Kidney (tissue), 22 donors: ENCODE measurements at regions of chr13 and their contacts with region 1.

Region 1: DNA sequence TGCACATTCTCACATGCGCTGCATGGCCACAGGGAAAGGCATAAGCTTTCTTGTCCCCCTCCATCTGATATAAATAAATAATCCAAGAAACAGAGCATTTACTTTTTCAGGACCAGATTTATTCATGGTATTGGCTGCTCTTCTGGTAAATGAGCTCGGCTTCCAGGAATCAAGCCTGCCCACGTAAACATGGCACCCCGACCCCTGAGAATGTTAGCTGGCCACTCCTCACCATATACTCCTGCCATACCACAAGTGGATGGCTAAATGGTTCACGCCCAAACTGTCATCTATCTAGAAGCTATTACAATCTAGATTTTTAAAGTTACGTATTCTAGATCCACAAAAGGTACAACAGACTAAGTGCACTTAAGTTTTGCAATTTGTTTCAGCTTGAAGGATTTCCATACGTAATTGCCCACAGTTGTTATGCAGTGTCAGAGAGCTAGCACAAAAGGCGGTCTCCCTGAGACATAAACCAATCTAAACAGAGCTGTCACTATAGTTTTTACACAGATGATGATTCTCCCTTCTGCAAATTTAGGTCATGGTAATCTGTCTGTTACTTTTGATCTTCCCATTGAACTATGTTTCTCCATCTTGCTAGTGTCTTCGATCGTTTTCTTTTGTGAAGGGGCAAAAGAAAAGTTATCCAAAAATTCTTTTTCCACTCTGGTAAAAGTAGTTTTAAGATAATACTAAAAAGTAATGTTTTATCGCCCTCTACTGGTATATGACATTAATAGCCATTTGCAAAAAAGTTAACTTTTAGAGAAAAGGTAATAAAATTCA is 16.2 kb upstream of the FOXO1 start:
- DNase-seq: peak in 2 of 5 donors; percentile 54 to 61
- H3K4me3 ChIP-seq: no peak overlapping the region
- H3K27ac ChIP-seq: no peak overlapping the region
- H3K4me1 ChIP-seq: peaks cover 0 to 4% (median 0%) of the 10 kb centered on the region in 3 donors
- H3K27me3 ChIP-seq: no peaks in the 10 kb centered on the region
- CTCF ChIP-seq: peak; percentile 46

Region 2: DNA sequence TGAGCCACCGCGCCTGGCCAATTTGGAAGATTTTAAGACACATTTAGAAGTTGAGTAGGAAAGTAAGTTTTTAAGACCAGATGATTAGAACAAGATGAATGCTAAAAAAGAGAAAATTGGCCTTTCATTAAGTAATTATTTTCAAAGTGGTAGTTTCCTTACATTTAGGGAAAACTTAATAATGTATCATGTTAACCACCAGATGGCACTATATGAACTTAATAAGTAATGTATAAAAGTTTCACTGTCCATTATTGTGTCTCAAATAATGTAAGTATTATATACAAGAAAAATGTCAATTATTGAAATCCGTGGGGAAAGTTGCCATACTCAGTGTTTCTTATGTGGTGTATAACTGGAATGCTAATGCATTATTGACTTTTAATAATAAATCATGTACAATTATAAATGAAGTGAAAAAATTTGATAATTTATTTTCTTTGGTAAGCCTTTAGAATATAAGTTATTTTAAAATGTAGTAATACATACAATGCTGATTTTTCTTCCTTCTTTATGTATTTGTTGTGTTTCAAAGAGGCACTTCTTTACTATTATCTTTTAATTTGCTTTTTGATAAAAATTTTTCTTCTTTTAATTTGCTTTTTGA is 998.0 kb before region 1 on chr13:
- intact Hi-C with region 1: loop called (anchors 10 kb)
- DNase-seq: peak in 2 of 5 donors; percentile 19 to 53
- H3K4me3 ChIP-seq: no peak overlapping the region
- H3K27ac ChIP-seq: no peak overlapping the region
- H3K4me1 ChIP-seq: no peaks in the 10 kb centered on the region
- H3K27me3 ChIP-seq: no peaks in the 10 kb centered on the region
- CTCF ChIP-seq: no peak

Region 3: DNA sequence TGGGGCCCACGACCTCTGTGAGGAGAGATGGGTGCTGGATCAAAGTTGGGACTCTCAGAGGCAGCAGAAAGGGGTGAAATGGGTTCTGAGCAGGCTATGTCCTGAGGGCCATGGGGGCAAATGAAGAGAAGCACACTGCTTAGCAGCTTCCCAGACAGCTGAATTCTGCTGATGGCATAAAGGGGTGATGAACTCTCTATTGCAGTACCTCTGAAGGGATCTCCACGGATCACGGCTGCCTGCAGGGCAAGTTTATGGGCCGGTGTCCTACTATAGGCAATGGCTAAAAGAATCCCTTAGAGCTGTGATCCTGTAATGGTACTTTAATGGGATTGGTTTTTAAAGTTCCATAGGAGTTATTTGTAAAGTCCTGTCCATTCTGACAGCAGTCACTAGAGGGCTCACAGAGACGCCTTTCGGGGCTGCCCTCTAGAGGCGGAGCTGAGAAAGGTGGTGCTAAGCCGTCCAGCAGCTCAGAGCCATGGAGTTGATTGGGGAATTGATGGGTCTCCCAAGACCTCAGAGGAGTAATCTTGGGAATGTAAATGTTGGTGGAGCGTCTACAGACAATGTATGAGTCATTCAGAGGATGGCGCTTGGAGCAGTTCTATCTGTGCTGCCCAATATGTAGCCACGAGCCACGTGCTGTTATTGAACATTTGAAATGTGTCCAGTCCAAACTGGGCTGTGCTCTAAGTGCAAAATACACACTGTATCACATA is 739.9 kb before region 1 on chr13:
- intact Hi-C with region 1: loop called (anchors 10 kb)
- DNase-seq: peak in 4 of 5 donors; percentile 53 to 82 (median 60)
- H3K4me3 ChIP-seq: no peak overlapping the region
- H3K27ac ChIP-seq: no peak overlapping the region
- H3K4me1 ChIP-seq: no peaks in the 10 kb centered on the region
- H3K27me3 ChIP-seq: no peaks in the 10 kb centered on the region
- CTCF ChIP-seq: peak; percentile 89

Region 4: DNA sequence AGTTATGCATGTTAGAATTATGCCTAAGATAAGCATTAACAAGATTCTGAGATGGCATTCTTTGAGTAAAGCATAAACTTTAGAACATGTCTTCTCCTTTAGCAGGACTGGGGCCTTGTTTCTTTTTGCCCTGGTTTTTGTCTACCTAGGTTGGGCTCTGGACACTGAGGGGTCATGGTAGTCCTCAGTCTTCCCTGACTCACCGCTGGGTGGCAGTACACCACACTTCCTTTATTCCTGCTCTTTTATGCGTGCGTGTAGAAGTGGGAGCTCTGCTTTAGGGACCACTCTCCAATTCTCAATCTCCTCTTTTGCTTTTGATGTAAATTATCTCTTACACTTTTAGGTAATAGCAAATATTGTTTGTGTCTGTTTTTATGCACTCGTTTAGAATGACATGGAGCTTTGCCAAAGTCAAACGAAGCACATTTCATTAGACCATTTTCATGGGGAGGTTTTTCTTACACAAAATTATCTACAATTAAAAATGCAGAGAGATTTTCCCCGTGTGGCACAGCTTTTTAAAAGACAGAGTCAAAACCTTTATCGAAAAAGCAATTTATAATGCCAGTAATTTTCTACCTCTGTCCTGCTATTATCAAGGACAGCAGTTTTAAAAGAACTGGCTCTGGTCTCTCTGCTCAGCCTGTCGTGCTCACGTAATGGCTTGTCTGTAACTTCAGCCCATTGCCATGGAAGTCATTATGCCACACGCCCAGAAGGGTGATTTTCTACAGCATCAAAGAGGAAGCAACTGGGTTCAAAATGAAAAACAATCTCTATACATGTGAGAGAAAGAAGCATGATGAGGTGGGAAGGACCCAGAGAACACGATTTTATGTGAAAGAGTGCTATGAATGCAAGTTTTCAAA is 613.2 kb before region 1 on chr13:
- intact Hi-C with region 1: loop called (anchors 10 kb)
- DNase-seq: peak; percentile 76 to 88 (median 82)
- H3K4me3 ChIP-seq: peak overlapping the region in 2 of 3 donors; percentile 15 to 27
- H3K27ac ChIP-seq: no peak overlapping the region
- H3K4me1 ChIP-seq: no peaks in the 10 kb centered on the region
- H3K27me3 ChIP-seq: no peaks in the 10 kb centered on the region
- CTCF ChIP-seq: peak; percentile 94